PC-9 (cell line): ENCODE measurements at regions of chr2 and their contacts with region 1.

Region 1: DNA sequence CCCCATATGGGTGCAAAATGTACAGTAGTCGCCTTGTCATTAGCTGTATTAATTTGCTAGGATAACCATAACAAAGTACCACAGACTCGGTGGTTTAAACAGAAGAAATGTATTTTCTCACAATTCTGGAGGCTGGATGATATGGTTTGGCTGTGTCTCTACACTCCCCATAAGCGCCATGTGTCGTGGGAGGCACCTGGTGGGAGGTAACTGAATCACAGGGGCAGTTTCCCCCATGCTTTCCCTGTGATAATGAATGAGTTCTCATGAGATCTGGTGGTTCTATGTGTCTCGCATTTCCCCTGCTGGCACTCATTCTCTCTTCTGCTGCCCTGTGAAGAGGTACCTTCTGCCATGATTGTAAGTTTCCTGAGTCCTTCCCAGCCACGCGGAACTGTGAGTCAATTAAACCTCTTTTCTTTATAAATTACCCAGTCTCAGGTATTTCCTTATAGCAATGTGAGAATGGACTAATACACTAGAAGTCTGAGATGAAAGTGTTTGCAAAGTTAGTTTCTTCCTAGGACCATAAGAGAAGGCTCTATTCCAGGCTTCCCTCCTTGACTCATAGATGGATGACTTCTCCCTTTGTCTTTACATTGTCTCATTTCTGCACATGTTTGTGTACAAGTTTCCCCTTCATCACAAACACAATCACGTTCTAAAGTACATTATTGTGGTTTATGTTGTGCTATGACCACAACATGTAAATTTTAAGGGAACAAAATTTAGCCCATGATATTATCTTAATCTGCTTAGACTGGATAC is 1442.6 kb downstream of the SUCLG1 start:
- DNase-seq: no peak
- H3K4me3 ChIP-seq: no peak overlapping the region
- H3K27ac ChIP-seq: no peak overlapping the region
- H3K4me1 ChIP-seq: no peaks in the 10 kb centered on the region
- H3K27me3 ChIP-seq: no peaks in the 10 kb centered on the region
- CTCF ChIP-seq: no peak

Region 2: GRCh38 chr2:83104202-83104601 is 87.7 kb after region 1 on chr2:
- CTCF ChIA-PET with region 1: interaction called, 18 read pairs
- POLR2A ChIA-PET with region 1: no interaction called
- intact Hi-C with region 1: no loop called
- DNase-seq: no peak
- H3K4me3 ChIP-seq: no peak overlapping the region
- H3K27ac ChIP-seq: no peak overlapping the region
- H3K4me1 ChIP-seq: no peaks in the 10 kb centered on the region
- H3K27me3 ChIP-seq: no peaks in the 10 kb centered on the region
- CTCF ChIP-seq: no peak